PC-9 (cell line): ENCODE measurements at regions of chr17 and their contacts with region 1.

Region 1: GRCh38 chr17:54968262-54968987 is at the starts of genes COX11 and STXBP4:
- DNase-seq: peak; percentile 93 to 94
- H3K4me3 ChIP-seq: peak within 1 kb of the TSS; percentile 68
- H3K27ac ChIP-seq: peak within 1 kb of the TSS; percentile 32
- H3K4me1 ChIP-seq: peaks cover 29% of the 10 kb centered on the region
- H3K27me3 ChIP-seq: no peaks in the 10 kb centered on the region
- CTCF ChIP-seq: peak; percentile 64
- total RNA-seq, gene COX11: 54.1 and 58.2 TPM in 2 replicates
- total RNA-seq, gene STXBP4: 6.2 and 12.0 TPM in 2 replicates

Region 2: GRCh38 chr17:54813896-54814295 is 154.5 kb before region 1 on chr17:
- CTCF ChIA-PET with region 1: no interaction called
- POLR2A ChIA-PET with region 1: no interaction called
- intact Hi-C with region 1: no loop called
- DNase-seq: peak in 1 of 2 experiments; percentile 62
- H3K4me3 ChIP-seq: no peak overlapping the region
- H3K27ac ChIP-seq: peak overlapping the region; percentile 49
- H3K4me1 ChIP-seq: peaks cover 13% of the 10 kb centered on the region
- H3K27me3 ChIP-seq: no peaks in the 10 kb centered on the region
- CTCF ChIP-seq: no peak

Region 3: GRCh38 chr17:54900457-54901229 is 67.8 kb before region 1 on chr17 and contains the start of gene TOM1L1:
- CTCF ChIA-PET with region 1: no interaction called
- POLR2A ChIA-PET with region 1: interaction called, 3 read pairs
- intact Hi-C with region 1: loop called (anchors 2 kb)
- DNase-seq: peak; percentile 85 to 86
- H3K4me3 ChIP-seq: peak within 1 kb of the TSS; percentile 79
- H3K27ac ChIP-seq: peak within 1 kb of the TSS; percentile 88
- H3K4me1 ChIP-seq: peaks cover 6% of the 10 kb centered on the region; the same call in 1 of the 2 replicates
- H3K27me3 ChIP-seq: no peaks in the 10 kb centered on the region
- CTCF ChIP-seq: peak; percentile 24; the same call in 1 of the 2 replicates
- total RNA-seq, gene TOM1L1: 41.5 and 46.8 TPM in 2 replicates